ENCODE measurements at regions of chr6 and their contacts with region 1.

Region 1: DNA sequence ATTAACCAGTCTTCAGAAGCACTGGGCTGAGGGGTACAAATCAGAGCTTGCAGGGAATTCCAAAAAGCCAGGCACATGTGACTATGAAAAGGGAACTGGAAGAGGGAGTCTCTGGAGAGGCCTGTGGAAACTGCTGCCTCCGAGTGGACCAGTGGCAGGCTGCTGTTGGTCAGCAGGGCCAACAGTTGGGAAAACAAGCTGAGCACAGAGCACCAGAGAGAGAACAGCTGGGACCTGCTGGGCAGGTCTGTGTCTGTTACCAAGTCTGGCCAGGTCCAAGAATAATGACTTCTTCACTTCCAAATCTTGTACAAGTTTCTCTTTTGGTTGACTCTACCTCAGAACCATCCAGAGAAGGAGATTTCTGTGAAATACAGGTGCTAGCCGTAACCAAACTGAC is 81.4 kb downstream of the LIN28B start:
- DNase-seq: no peak
- H3K4me3 ChIP-seq: no peak overlapping the region
- H3K27ac ChIP-seq: no peak overlapping the region
- H3K4me1 ChIP-seq: peaks cover 0 to 15% (median 4%) of the 10 kb centered on the region in 4 experiments; a peak in 2 of 7 replicates
- H3K27me3 ChIP-seq: no peaks in the 10 kb centered on the region
- CTCF ChIP-seq: no peak
- EP300 ChIP-seq: no peak
- POLR2A ChIP-seq: no peak
- RAD21 ChIP-seq: peak; percentile 32 to 47

Region 2: GRCh38 chr6:104754788-104755409 is 283.4 kb before region 1 on chr6:
- CTCF ChIA-PET with region 1: no interaction called
- POLR2A ChIA-PET with region 1: no interaction called
- DNase-seq: no peak
- H3K4me3 ChIP-seq: no peak overlapping the region
- H3K27ac ChIP-seq: no peak overlapping the region
- H3K4me1 ChIP-seq: no peaks in the 10 kb centered on the region
- H3K27me3 ChIP-seq: no peaks in the 10 kb centered on the region
- CTCF ChIP-seq: no peak
- EP300 ChIP-seq: no peak
- POLR2A ChIP-seq: no peak
- RAD21 ChIP-seq: no peak

Region 3: DNA sequence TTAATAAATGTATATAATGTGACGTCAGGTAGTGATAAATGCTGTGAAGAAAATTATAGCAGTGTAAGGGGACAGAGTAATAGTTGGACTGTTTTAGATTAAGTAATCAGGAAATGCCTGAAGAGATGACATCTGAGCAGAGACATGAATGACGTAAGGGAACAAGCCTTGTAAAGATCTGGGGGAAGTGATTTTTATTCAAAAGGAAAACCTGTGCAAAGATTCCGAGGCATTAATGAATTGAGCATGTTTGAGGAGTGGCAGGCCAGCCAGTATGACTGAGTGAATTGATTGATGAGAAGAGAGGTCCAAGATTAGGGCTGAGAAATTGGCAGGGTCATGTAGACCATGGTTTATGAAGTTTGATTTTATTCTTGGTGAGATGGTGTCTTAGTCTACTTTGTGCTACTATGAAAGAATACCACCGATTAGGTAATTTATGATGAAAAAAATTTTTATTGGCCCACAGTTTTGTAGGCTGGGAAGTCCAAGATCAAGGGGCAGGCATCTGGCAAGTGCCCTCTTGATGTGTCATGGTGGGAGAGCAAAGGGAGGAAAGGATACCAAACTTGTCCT is 13.7 kb after region 1 on chr6:
- CTCF ChIA-PET with region 1: interaction called, 3 read pairs
- POLR2A ChIA-PET with region 1: interaction called, 11 read pairs
- DNase-seq: no peak
- H3K4me3 ChIP-seq: no peak overlapping the region
- H3K27ac ChIP-seq: no peak overlapping the region
- H3K4me1 ChIP-seq: peaks cover 0 to 5% (median 2%) of the 10 kb centered on the region in 4 experiments; a peak in 3 of 7 replicates
- H3K27me3 ChIP-seq: no peaks in the 10 kb centered on the region
- CTCF ChIP-seq: no peak
- EP300 ChIP-seq: no peak
- POLR2A ChIP-seq: no peak
- RAD21 ChIP-seq: no peak

Region 4: DNA sequence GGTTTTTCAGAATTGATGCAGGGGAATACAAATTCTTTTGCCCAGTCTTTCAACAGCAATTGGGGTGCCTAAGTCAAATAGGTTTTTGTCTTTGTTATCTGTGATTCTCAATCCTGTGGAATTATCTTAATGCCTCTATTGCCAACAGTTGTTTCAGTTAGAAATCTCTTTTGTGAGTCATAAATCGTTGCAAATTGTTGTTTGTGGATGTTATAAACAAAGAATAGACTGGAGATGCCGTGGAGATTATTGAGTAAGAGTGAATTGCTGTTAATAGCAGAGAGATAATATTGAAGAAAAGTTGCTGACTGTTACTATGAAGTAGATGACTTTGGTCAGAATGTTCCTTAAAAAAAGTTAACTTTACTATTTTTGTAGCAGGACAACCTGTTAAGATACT is 205.2 kb after region 1 on chr6:
- CTCF ChIA-PET with region 1: no interaction called
- POLR2A ChIA-PET with region 1: no interaction called
- DNase-seq: no peak
- H3K4me3 ChIP-seq: no peak overlapping the region
- H3K27ac ChIP-seq: no peak overlapping the region
- H3K4me1 ChIP-seq: no peaks in the 10 kb centered on the region
- H3K27me3 ChIP-seq: no peaks in the 10 kb centered on the region
- CTCF ChIP-seq: no peak
- EP300 ChIP-seq: no peak
- POLR2A ChIP-seq: no peak
- RAD21 ChIP-seq: no peak

Region 5: GRCh38 chr6:105310371-105310770 is 272.1 kb after region 1 on chr6:
- CTCF ChIA-PET with region 1: no interaction called
- POLR2A ChIA-PET with region 1: no interaction called
- DNase-seq: no peak
- H3K4me3 ChIP-seq: no peak overlapping the region
- H3K27ac ChIP-seq: no peak overlapping the region
- H3K4me1 ChIP-seq: peaks cover 0 to under 1% (median 0%) of the 10 kb centered on the region in 4 experiments; a peak in 2 of 7 replicates
- H3K27me3 ChIP-seq: no peaks in the 10 kb centered on the region
- CTCF ChIP-seq: no peak
- EP300 ChIP-seq: no peak
- POLR2A ChIP-seq: no peak
- RAD21 ChIP-seq: no peak

Measured in H1 (cell line).